Mucosa of descending colon (tissue), 3 donors: ENCODE measurements at regions of chr11 and their contacts with region 1.

Region 1: GRCh38 chr11:67160874-67161783 is 42.1 kb downstream of the KDM2A start:
- DNase-seq: no peak
- ATAC-seq: no peak
- H3K4me3 ChIP-seq: no peak overlapping the region
- H3K4me1 ChIP-seq: no peaks in the 10 kb centered on the region
- CTCF ChIP-seq: no peak

Region 2: GRCh38 chr11:67082035-67082791 is 78.9 kb before region 1 on chr11:
- intact Hi-C with region 1: loop called in 1 of 2 experiments (anchors 10 kb)
- DNase-seq: peak in 2 of 3 donors; percentile 14 to 34
- ATAC-seq: no peak
- H3K4me3 ChIP-seq: no peak overlapping the region
- H3K4me1 ChIP-seq: peaks cover 14% of the 10 kb centered on the region
- CTCF ChIP-seq: no peak

Region 3: GRCh38 chr11:67373925-67374618 is 212.9 kb after region 1 on chr11:
- intact Hi-C with region 1: no loop called
- DNase-seq: peak; percentile 76 to 89 (median 83)
- ATAC-seq: peak; percentile 59
- H3K4me3 ChIP-seq: no peak overlapping the region
- H3K4me1 ChIP-seq: peaks cover 27% of the 10 kb centered on the region
- CTCF ChIP-seq: peak; percentile 37